ENCODE measurements at regions of chr11 and their contacts with region 1.

Region 1: GRCh38 chr11:57712256-57713150 is at the start of gene TMX2:
- H3K4me3 Mint-ChIP-seq: peak within 1 kb of the TSS; percentile 97
- H3K27ac Mint-ChIP-seq: peak within 1 kb of the TSS; percentile 98
- H3K4me1 Mint-ChIP-seq: peaks cover 47% of the 10 kb centered on the region
- H3K27me3 Mint-ChIP-seq: no peaks in the 10 kb centered on the region

Region 2: DNA sequence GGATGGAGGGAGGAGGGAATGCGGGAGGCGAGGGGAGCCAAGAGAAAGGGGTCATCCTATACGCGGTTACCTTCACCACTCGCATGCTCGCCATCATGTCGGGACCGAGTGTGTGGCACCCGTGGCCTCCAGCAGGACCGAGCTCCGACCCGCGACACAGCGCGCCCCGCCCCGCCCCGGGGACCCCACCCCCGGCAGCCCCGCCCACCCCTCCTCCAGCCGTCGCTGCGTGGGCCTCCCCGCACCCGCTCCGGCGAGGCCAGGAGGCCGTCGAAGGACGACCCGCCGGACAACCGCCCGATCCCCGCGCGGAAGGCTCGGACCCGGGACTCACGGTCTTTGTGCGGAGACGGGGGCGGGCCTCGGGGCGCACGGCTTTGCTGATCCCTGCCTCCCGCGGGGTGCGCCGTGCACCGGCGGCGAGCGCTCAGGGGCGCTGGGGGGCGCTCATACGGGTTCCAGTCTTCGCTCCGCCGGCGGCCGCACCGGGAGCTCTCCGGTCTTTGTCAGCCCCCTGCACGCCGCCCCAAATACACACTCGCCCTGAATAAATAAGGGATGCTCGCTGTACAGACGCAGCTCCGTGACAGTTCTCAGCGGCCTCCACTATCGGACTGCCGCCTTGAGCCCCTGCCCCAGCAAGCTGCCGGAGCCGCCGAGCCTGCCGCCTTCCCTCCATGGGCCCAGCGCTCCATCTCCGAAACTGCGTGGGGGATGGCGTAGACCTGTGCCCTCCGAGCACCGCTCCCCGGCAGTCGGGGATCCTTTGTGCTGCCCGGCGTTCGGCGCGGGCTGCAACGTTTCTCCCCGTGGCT is 144.8 kb before region 1 on chr11 and contains the start of gene UBE2L6:
- intact Hi-C with region 1: loop called (anchors 1 kb)
- H3K4me3 Mint-ChIP-seq: peak within 1 kb of the TSS; percentile 91
- H3K27ac Mint-ChIP-seq: peak within 1 kb of the TSS; percentile 82
- H3K4me1 Mint-ChIP-seq: peaks cover 68% of the 10 kb centered on the region
- H3K27me3 Mint-ChIP-seq: no peaks in the 10 kb centered on the region

Region 3: GRCh38 chr11:57657194-57658022 is 55.1 kb before region 1 on chr11 and contains the start of gene CLP1:
- intact Hi-C with region 1: loop called (anchors 1 kb)
- H3K4me3 Mint-ChIP-seq: peak within 1 kb of the TSS; percentile 99
- H3K27ac Mint-ChIP-seq: peak within 1 kb of the TSS; percentile 92
- H3K4me1 Mint-ChIP-seq: peaks cover 51% of the 10 kb centered on the region
- H3K27me3 Mint-ChIP-seq: no peaks in the 10 kb centered on the region

Region 4: DNA sequence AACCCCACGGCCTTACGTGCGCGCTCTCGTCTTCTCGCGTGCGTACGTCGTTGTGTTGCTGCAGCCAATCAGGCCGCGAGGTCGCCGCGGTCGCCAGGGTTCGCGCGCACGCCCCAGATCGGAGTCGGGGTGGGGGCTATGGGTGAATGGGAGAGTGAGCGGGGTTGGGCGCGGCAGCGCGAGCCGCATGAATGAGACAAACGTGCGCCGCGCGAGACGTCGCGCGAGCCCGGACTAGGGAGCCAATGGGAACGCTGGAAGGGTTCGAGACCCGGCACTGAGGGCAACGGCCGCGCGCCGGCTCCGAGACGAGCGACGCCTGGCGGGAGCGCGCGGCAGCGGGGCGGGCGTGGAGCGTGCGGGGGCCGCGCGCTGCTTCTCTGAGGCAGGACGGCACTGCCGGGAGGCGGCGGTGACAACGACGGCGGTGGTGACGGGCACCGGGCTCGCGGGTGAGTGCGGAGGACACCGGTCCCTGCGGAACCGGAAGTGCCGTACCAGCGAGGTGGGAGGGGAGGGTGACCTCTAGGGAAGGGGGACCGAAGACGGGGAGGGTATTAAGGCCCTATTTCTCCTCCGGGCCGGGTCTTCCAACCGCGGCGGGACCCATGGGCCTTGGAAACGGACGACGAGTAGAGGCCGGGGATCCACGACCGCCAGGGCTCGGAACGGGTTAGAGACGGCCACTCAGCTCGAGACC is 44.6 kb before region 1 on chr11 and contains the start of gene ZDHHC5:
- intact Hi-C with region 1: loop called (anchors 1 kb)
- H3K4me3 Mint-ChIP-seq: peak within 1 kb of the TSS; percentile 84
- H3K27ac Mint-ChIP-seq: peak within 1 kb of the TSS; percentile 97
- H3K4me1 Mint-ChIP-seq: peaks cover 40% of the 10 kb centered on the region
- H3K27me3 Mint-ChIP-seq: no peaks in the 10 kb centered on the region

Region 5: DNA sequence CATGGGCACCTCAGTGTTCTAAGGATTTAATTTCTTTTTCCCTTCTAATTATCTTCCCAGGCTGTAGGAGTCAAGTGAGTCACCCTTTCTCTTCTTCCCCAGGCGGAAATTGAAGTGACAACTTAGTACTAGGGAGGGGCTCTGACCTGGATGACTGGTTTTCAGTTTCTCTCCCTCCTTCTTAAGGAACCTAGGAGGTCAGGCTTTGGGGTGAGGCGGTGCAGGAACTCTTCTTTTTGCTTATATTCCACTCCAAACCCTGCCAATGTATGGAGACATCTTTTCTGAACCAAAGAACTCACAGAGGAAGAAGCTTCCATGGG is 32.0 kb before region 1 on chr11:
- intact Hi-C with region 1: no loop called
- H3K4me3 Mint-ChIP-seq: no peak overlapping the region
- H3K27ac Mint-ChIP-seq: no peak overlapping the region
- H3K4me1 Mint-ChIP-seq: peaks cover 27% of the 10 kb centered on the region
- H3K27me3 Mint-ChIP-seq: no peaks in the 10 kb centered on the region

Region 6: DNA sequence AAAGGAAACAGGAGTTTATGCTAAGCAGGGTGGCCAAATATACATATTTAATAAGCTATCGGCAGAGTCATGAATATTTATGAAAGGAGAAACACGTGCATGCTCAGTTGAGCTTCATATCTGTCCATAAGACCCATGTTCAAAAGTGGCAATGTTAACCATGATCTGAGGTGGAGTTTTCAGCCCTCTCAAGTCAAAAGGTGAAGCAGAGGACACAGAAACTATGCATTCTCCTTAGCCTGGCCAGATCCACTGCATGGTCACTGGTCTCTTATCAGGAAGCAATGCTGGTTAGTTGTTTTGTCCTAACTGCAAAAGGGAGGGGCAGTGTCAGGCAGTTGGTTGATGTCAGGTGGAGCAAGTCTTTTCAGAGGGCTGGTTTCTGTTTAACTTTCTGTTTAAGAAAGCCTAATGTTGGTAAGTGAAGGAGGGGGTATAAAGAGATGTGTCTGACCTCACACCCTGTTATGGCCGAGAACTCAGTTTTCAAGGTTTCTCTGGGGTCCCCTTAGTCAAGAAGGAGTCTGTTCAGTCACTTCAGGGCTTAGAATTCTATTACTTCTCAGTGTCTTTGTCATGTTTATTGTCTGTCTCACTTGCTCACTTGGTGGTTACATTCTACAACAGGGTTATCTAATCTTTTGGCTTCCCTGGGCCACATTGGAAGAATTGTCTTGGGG is 23.3 kb after region 1 on chr11:
- intact Hi-C with region 1: loop called (anchors 2 kb)
- H3K4me3 Mint-ChIP-seq: no peak overlapping the region
- H3K27ac Mint-ChIP-seq: no peak overlapping the region
- H3K4me1 Mint-ChIP-seq: peaks cover 17% of the 10 kb centered on the region
- H3K27me3 Mint-ChIP-seq: no peaks in the 10 kb centered on the region

Region 7: GRCh38 chr11:57741132-57742086 is 28.9 kb after region 1 on chr11 and contains the start of gene SELENOH:
- intact Hi-C with region 1: loop called (anchors 1 kb)
- H3K4me3 Mint-ChIP-seq: peak within 1 kb of the TSS; percentile 89
- H3K27ac Mint-ChIP-seq: peak within 1 kb of the TSS; percentile 99
- H3K4me1 Mint-ChIP-seq: peaks cover 19% of the 10 kb centered on the region
- H3K27me3 Mint-ChIP-seq: no peaks in the 10 kb centered on the region

Region 8: DNA sequence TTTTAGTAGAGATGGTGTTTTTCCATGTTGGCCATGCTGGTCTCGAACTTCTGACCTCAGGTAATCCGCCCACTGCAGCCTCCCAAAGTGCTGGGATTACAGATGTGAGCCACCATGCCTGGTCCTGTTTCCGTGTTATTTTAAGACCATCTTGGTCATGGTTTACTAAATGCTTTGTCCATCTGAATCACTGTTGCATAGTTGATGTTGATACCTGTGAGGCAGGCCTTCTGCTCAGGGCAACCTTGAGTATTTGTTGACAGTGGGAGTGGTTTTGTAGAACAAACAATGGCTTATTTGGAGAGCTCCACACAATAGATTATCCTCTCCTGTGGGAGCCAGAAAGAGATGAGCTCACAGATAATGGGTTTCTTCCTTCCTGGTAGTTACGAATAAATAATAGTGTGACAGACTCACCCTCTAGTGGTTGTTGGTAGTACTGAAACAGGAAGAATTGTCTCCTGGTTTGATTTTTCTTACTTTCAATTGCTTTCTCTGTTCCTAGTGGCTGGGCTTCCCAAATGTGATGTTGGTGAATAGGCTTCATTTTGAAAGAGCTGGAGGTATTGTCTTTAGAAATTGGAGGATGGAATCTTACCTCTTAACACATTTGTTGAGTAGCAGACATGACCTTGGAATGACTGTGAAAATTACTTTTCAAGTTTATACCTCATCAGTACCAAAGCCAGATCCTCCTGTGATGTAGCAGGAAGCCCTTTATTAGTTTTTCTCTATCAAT is 88.1 kb after region 1 on chr11:
- intact Hi-C with region 1: loop called (anchors 2 kb)
- H3K4me3 Mint-ChIP-seq: no peak overlapping the region
- H3K27ac Mint-ChIP-seq: peak overlapping the region; percentile 60
- H3K4me1 Mint-ChIP-seq: peaks cover 41% of the 10 kb centered on the region
- H3K27me3 Mint-ChIP-seq: no peaks in the 10 kb centered on the region

Measured in dendritic cell treated with granulocyte-macrophage colony-stimulating factor and Interleukin-4, amounts not matched to agents 40 ng/mL and 50 ng/mL, for 4 days (primary cell).